PC-9 (cell line): ENCODE measurements at regions of chr3 and their contacts with region 1.

Region 1: GRCh38 chr3:163132111-163132510 is 1635.5 kb downstream of the OTOL1 start:
- DNase-seq: no peak
- H3K4me3 ChIP-seq: no peak overlapping the region
- H3K27ac ChIP-seq: no peak overlapping the region
- H3K4me1 ChIP-seq: no peaks in the 10 kb centered on the region
- H3K27me3 ChIP-seq: no peaks in the 10 kb centered on the region
- CTCF ChIP-seq: no peak

Region 2: GRCh38 chr3:162973518-162973917 is 158.6 kb before region 1 on chr3:
- CTCF ChIA-PET with region 1: no interaction called
- POLR2A ChIA-PET with region 1: no interaction called
- intact Hi-C with region 1: no loop called
- DNase-seq: no peak
- H3K4me3 ChIP-seq: no peak overlapping the region
- H3K27ac ChIP-seq: no peak overlapping the region
- H3K4me1 ChIP-seq: no peaks in the 10 kb centered on the region
- H3K27me3 ChIP-seq: no peaks in the 10 kb centered on the region
- CTCF ChIP-seq: no peak

Region 3: DNA sequence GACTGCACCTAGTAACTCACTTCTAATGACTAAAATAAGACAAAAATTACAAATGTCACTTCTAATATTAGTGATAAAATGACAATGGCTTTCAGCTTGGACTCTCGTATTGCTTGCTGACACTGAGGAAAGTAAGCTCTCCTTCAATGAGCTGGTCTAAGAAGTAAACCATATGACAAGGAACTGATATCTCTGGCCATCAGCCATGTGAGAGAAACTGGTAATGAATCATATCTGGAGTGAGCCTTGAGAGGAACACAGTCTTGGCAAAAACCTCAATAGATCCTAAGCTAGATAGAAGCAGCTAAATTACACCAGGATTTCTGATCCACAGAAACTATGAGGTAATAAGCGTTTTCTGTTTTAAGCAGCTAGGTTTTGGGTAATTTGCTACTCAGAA is 60.4 kb before region 1 on chr3:
- CTCF ChIA-PET with region 1: no interaction called
- POLR2A ChIA-PET with region 1: no interaction called
- intact Hi-C with region 1: loop called (anchors 10 kb)
- DNase-seq: peak in 1 of 2 experiments; percentile 22
- H3K4me3 ChIP-seq: no peak overlapping the region
- H3K27ac ChIP-seq: no peak overlapping the region
- H3K4me1 ChIP-seq: no peaks in the 10 kb centered on the region
- H3K27me3 ChIP-seq: no peaks in the 10 kb centered on the region
- CTCF ChIP-seq: no peak

Region 4: GRCh38 chr3:163391407-163392181 is 259.5 kb after region 1 on chr3:
- CTCF ChIA-PET with region 1: no interaction called
- POLR2A ChIA-PET with region 1: no interaction called
- intact Hi-C with region 1: no loop called
- DNase-seq: no peak
- H3K4me3 ChIP-seq: no peak overlapping the region
- H3K27ac ChIP-seq: no peak overlapping the region
- H3K4me1 ChIP-seq: no peaks in the 10 kb centered on the region
- H3K27me3 ChIP-seq: no peaks in the 10 kb centered on the region
- CTCF ChIP-seq: no peak